ENCODE measurements at regions of chr14 and their contacts with region 1.

Region 1: GRCh38 chr14:75002392-75003249 is at the start of gene EIF2B2:
- DNase-seq: peak; percentile 97 to 98
- ATAC-seq: peak; percentile 98 to 99
- H3K4me3 ChIP-seq: peak within 1 kb of the TSS; percentile 75 to 95 (median 89)
- H3K27ac ChIP-seq: peak within 1 kb of the TSS; percentile 82 to 94 (median 87)
- H3K4me1 ChIP-seq: peaks cover 12 to 14% of the 10 kb centered on the region in 2 donors
- H3K27me3 ChIP-seq: no peaks in the 10 kb centered on the region
- CTCF ChIP-seq: peak in 4 of 5 experiments; percentile 27 to 37 (median 33)
- POLR2A ChIP-seq: peak; percentile 67 to 80
- total RNA-seq, gene EIF2B2: 42.7 to 79.0 (median 69.9) TPM

Region 2: DNA sequence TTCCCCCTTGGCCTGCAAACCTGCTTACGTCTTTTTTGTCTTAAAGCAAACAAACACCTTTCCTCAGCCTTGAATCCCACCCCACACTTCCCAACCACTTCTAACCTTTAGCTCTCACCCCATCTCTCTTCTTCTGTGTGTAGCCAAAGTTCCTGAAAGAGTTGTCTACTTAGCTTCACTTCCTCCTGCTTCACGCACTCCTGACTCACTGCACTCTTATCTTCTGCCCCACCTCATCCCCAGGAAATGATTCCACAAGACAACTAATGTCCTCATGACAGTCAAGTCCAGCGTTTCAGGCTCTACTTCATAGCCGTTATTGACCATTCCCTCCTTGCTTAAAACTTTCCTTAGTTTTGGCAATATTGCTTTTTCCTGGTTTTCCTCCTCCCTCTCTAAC is 22.5 kb after region 1 on chr14:
- in situ Hi-C with region 1: no loop called
- intact Hi-C with region 1: no loop called
- DNase-seq: no peak
- ATAC-seq: no peak
- H3K4me3 ChIP-seq: no peak overlapping the region
- H3K27ac ChIP-seq: no peak overlapping the region
- H3K4me1 ChIP-seq: peaks cover 0 to 11% of the 10 kb centered on the region in 2 donors
- H3K27me3 ChIP-seq: no peaks in the 10 kb centered on the region
- CTCF ChIP-seq: no peak
- POLR2A ChIP-seq: no peak

Region 3: DNA sequence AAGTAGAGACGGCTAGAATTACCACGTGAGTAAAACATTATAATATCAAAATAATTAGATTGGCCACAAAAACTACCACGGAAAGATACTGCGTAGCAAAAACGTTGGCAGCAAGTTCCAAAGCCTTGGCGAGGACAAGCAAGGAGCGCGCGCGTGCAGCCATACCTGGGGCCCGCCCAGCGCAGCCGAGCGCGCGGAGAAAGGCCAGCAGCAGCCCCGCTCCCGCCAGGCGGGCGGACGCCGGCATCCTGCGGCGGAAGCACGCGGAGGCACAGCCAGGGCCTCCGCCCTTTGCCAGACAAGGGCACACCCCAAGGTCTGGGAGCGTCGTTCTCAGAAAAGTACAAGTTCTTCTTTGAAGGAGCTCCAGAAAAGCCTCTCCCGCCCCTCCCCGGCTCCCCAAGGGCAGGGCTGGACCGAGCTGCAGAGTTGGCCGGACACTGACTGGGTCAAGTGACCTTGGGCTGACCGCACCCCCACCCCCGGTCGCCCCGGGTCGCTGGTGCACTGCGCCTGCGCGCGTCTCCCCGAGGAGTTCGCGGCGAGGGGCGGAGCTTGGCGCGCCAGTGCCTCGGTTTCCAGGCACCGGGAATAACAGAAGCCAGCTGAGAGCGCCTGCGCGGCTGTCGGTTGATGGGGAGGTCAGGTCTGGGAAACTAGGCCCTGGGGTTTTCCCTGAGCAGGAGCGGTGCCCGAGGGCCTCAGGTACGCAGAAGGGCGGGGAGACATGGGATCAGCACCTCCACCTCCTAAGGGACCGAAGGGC is 66.6 kb after region 1 on chr14 and contains the start of gene ZC2HC1C:
- in situ Hi-C with region 1: no loop called
- intact Hi-C with region 1: loop called (anchors 2 kb)
- DNase-seq: peak; percentile 96 to 99
- ATAC-seq: peak; percentile 79 to 85
- H3K4me3 ChIP-seq: peak within 1 kb of the TSS; percentile 46 to 64 (median 60)
- H3K27ac ChIP-seq: peak within 1 kb of the TSS; percentile 90 to 95 (median 93)
- H3K4me1 ChIP-seq: peaks cover 45 to 57% of the 10 kb centered on the region in 2 donors
- H3K27me3 ChIP-seq: no peaks in the 10 kb centered on the region
- CTCF ChIP-seq: no peak
- POLR2A ChIP-seq: peak; percentile 85 to 87
- total RNA-seq, gene ZC2HC1C: 5.3 to 13.1 (median 7.3) TPM